Heart left ventricle (tissue), 16 donors: ENCODE measurements at regions of chr3 and their contacts with region 1.

Region 1: DNA sequence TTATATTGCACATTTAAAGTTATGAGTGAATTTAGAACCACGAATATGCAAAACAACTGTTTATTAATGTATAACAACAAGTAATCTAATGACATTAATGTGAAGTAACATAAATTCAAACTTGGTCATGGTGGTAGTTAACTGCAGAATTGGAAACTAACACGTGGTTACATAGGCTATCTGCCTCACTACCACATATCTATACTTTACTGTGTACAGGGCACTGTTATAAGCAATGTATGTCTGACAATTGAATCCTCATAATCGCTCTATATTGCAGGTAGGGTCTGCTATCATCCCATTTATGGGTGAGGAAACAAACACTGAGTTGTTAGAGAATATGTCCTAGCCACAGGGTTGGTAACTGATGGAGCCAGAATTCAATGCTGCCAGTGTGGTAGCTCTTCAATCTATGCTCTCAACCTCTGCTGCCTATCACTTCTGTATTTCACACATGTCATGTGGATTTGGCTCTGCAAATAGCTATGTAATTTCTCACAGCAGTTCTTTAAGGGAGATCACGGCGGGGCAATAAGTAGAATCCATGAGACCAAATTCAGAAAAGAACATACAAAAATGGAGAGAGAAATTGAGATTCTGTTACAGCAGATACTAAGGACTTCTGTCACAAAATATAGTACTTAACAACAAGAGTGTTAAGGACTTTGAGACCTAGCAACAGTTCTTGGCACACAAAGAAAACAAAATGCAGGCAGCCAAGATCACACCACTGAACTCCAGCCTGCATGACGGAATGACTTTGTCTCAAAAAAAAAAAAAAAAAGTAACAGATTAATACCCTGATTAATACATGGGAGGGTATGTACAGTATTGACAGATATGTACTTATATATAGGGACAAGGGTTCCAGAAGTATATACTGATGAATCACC is 100.0 kb upstream of the CSPG5 start:
- DNase-seq: no peak
- ATAC-seq: peak in 1 of 4 donors; percentile 22
- H3K4me3 ChIP-seq: no peak overlapping the region
- H3K27ac ChIP-seq: no peak overlapping the region
- H3K4me1 ChIP-seq: no peaks in the 10 kb centered on the region
- H3K27me3 ChIP-seq: no peaks in the 10 kb centered on the region
- CTCF ChIP-seq: no peak
- POLR2A ChIP-seq: no peak

Region 2: GRCh38 chr3:47605652-47606051 is 73.0 kb before region 1 on chr3:
- intact Hi-C with region 1: no loop called
- DNase-seq: no peak
- ATAC-seq: no peak
- H3K4me3 ChIP-seq: no peak overlapping the region
- H3K27ac ChIP-seq: no peak overlapping the region
- H3K4me1 ChIP-seq: peaks cover 0 to 16% (median under 1%) of the 10 kb centered on the region in 12 donors
- H3K27me3 ChIP-seq: no peaks in the 10 kb centered on the region
- CTCF ChIP-seq: no peak
- POLR2A ChIP-seq: no peak

Region 3: DNA sequence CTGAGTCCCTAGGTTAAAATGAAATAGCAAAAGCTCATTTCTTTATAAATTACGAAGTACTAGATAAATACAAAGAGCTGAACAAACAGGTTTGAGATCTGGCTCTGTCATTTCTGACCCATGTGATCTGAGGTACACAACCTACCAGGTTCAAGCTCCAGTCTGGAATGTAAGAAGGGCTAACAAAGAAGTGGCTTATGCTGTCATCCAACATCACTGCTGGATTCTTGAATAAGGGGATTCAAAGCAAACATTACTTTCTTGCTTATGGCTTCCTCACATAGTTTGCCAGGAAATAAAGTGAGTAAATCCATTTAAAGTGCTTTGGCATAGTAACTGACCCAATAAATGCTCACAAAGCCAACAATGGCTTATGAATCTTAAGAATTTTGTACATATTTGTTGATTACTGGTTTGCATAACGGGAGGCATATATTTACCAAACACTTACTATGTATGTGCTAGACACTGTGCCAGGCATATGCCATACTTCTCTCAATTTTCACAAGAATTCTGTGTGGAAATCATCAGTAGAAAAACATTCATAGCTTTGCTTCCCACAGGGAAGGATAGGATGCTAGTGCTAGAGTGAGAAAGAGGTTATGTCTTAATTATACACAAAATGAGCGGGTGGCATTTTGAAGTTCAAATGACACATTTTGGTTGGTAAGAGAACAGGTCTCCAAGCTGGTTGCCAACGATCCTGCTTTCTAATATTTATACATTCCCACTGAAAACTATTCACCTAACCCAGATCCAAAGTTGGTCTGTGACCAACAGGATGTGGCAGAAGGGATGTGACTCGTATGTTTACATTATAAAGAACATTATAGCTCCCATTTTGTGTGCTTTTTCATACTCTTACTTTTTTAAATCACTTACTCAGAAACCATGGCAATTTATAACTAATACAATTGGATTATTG is 61.3 kb before region 1 on chr3:
- intact Hi-C with region 1: loop called in 1 of 10 experiments (anchors 5 kb)
- DNase-seq: no peak
- ATAC-seq: no peak
- H3K4me3 ChIP-seq: no peak overlapping the region
- H3K27ac ChIP-seq: no peak overlapping the region
- H3K4me1 ChIP-seq: peaks cover 0 to 16% (median 6%) of the 10 kb centered on the region in 12 donors
- H3K27me3 ChIP-seq: no peaks in the 10 kb centered on the region
- CTCF ChIP-seq: no peak
- POLR2A ChIP-seq: no peak

Region 4: DNA sequence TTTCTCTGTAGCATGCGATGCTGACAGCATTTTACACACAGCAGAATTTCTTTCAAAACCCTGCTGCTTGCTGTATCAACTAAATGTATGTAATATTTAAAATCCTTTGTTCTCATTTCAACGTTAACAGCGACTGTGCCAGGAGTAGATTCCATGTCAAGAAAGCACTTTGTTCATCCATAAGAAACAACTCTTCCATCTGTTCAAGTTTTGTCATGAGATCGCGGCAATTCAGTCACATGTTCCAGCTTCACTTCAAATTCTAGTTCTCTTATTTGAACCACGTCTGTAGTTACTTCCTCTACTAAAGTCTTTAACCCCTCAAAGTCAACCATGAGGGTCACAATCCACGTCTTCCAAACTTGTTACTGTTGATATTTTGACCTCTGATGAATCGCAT is 52.4 kb after region 1 on chr3:
- intact Hi-C with region 1: no loop called
- DNase-seq: no peak
- ATAC-seq: no peak
- H3K4me3 ChIP-seq: no peak overlapping the region
- H3K27ac ChIP-seq: no peak overlapping the region
- H3K4me1 ChIP-seq: no peaks in the 10 kb centered on the region
- H3K27me3 ChIP-seq: no peaks in the 10 kb centered on the region
- CTCF ChIP-seq: no peak
- POLR2A ChIP-seq: no peak